ENCODE measurements at regions of chr7 and their contacts with region 1.

Region 1: GRCh38 chr7:101410743-101411507 is 48.2 kb downstream of the COL26A1 start:
- DNase-seq: no peak
- H3K4me3 ChIP-seq: no peak overlapping the region
- CTCF ChIP-seq: peak; percentile 87

Region 2: DNA sequence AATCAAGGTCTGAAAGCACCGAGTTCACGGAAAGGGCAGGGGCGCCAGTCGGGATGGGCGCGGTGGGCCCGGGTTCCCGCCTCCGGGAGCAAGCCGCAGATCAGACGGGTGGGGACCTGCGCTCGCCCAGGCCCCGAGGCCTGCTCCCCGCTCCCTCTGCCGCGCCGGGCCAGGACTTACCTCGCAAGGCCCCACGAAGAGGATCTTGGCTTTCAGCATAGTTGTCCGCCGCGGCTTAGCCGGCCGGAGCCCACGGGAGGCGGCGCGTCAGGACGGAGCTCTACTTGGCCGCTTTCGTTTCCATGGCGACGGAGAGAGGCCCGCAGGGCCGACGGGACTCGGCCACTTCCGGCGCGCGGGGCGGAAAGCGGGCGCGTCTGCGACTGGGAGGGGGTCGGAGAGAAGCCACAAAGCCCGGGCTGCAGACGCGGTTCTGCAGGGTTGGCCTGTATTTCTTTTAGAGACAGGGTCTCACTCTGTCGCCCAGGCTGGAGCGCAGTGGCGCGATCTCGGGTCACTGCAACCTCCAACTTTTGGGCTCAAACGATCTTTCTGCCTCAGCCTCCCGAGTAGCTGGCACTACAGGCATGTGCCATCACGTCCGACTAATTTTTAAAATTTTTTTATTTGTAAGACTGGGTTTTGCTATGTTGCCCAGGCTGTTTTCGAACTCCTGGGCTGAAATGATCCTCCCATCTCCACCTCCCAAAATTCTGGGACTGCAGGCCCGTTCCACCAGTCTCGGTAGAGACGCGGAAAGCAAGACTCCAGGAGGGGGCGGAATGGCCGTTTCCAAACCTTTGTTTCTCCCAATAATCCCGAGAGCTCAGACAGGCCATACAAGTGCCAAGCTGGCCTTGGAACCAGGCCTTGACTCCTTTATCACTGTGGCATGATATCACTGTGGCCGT is 89.2 kb before region 1 on chr7 and contains the start of gene IFT22:
- CTCF ChIA-PET with region 1: interaction called, 11 read pairs
- POLR2A ChIA-PET with region 1: no interaction called
- DNase-seq: peak; percentile 37
- H3K4me3 ChIP-seq: peak within 1 kb of the TSS; percentile 81
- CTCF ChIP-seq: peak; percentile 54

Region 3: DNA sequence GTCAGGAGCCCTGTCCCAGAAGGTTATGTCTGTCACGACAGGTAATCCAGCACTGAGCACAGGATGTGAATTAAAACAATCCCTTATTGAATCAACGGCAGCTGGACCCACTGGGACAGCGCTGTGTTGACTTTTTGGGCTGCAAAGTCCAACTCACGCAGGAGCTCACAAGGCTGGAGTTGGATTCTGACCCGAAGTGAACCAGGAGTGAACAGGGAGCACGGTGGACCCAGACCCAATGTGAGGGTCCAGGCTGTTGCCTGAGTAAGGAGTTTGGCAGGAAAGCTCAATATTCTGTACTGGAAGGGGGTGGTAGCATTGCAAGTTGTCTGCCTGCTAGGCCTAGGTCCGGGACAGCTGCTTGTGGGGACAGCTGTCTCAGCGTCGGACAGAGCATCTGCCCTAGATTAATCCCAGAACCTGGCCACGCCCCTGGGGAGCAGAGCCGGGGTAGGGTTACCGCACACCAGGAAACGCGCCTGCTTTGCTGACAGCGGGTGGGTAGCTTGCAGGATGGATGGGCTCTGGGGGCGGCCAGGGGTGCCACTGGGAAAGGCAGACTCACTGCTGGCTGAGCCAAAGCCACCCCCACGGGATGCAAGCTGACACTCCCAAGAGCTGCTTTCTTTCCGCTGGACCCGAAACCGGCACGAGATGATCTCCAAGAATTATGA is 24.2 kb before region 1 on chr7:
- CTCF ChIA-PET with region 1: interaction called, 12 read pairs
- POLR2A ChIA-PET with region 1: no interaction called
- DNase-seq: no peak
- H3K4me3 ChIP-seq: peak overlapping the region; percentile 27; the same call in 1 of the 2 replicates
- CTCF ChIP-seq: no peak

Measured in AG04449 (cell line).